CD14-positive monocyte (primary cell): ENCODE measurements at regions of chr11 and their contacts with region 1.

Region 1: DNA sequence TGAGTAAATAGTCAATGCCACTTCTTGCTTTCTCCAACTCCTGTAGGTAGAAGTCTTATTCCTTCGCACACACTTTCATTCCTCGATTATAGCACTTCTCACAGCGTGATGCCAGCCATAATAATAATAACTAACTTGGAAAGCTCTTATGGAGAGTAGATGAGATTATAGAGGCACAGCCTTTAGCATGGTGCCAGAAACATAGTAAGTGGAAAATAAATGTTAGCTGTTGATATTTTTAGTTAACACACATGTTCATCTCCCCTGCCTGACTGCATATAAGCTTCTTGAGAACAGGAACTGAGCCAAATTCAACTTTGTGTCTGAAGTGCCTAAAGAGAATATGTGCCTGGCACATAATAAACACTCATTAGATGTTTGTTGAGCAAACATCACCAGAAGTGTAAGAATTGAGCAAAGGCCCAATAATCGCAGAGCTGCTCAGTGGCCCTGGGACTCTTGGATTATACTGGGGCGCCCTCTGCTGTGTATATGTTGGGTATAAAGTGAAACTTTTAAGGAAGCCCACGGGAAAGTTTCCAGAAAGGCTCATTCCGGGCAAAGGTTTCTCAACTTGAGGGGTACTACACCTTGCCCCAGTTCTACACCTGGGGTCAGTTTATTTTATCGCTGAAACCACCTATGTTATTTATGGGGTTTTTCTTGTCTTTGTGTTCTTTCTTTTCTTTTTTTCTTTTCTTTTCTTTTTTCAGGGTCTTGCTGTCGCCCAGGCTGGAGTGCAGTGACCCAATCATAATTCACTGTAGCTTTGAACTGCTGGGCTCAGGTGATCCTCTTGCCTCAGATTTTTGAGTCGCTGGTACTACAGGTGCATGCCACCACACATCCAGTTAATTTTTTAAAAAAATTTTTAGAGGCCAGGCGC is 22.3 kb downstream of the SLN start:
- DNase-seq: peak; percentile 19 to 52 (median 42)
- H3K4me3 ChIP-seq: no peak overlapping the region
- H3K4me3 Mint-ChIP-seq: no peak overlapping the region
- H3K27ac ChIP-seq: no peak overlapping the region
- H3K27ac Mint-ChIP-seq: no peak overlapping the region
- H3K4me1 ChIP-seq: no peaks in the 10 kb centered on the region
- H3K4me1 Mint-ChIP-seq: peaks cover 2% of the 10 kb centered on the region
- H3K27me3 ChIP-seq: peaks cover 2 to 3% of the 10 kb centered on the region in 2 donors
- H3K27me3 Mint-ChIP-seq: peaks cover 4 to 11% (median 8%) of the 10 kb centered on the region in 3 donors
- CTCF ChIP-seq: peak; percentile 51

Region 2: GRCh38 chr11:107549253-107549953 is 140.2 kb before region 1 on chr11:
- intact Hi-C with region 1: loop called in 1 of 2 experiments (anchors 5 kb)
- DNase-seq: peak; percentile 12 to 46 (median 31)
- H3K4me3 ChIP-seq: no peak overlapping the region
- H3K4me3 Mint-ChIP-seq: no peak overlapping the region
- H3K27ac ChIP-seq: no peak overlapping the region
- H3K27ac Mint-ChIP-seq: no peak overlapping the region
- H3K4me1 ChIP-seq: no peaks in the 10 kb centered on the region
- H3K4me1 Mint-ChIP-seq: no peaks in the 10 kb centered on the region
- H3K27me3 ChIP-seq: no peaks in the 10 kb centered on the region
- H3K27me3 Mint-ChIP-seq: peaks cover 0 to 3% (median 0%) of the 10 kb centered on the region in 3 donors
- CTCF ChIP-seq: peak; percentile 86

Region 3: DNA sequence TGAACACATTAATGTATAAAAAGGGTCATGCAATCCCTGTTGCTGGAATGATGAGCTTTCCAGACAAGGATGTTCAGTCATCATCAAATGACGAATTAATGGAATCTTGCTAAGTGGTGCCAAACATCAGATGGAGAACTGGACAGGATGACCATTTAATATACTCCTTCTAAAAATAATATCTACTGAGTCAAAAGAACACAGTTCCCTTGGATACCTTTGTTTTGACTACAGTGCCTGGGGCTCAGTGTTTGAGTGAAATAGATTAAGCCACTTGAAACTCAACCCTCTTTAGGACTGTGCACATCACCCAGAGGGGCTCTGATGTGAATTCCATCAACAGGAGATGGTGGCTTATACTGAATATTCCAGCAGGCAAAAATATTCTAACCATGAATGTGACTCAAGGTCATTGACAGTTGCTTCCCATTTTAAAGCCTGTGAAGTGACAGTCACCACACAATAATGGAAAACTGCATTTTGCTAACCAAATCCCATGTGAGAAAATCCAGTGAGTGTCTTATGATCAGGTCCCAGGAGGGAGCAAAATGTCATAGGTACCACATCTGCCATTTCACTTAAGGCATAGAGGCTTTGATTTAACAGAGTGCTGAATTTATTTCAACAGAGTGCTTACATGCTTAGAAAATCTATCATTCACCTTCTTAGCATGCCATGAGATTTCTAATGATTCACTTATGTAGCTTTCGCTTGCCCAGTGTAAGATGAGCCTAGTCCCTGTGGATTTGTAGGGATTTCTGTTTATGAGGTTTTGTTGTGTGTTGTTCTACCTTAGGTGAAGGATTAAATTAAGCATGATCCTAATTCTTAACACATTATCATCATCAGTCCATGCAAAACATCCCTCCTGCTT is 63.6 kb after region 1 on chr11:
- intact Hi-C with region 1: no loop called
- DNase-seq: no peak
- H3K4me3 ChIP-seq: no peak overlapping the region
- H3K4me3 Mint-ChIP-seq: no peak overlapping the region
- H3K27ac ChIP-seq: no peak overlapping the region
- H3K27ac Mint-ChIP-seq: no peak overlapping the region
- H3K4me1 ChIP-seq: no peaks in the 10 kb centered on the region
- H3K4me1 Mint-ChIP-seq: no peaks in the 10 kb centered on the region
- H3K27me3 ChIP-seq: peaks cover 0 to under 1% of the 10 kb centered on the region in 2 donors
- H3K27me3 Mint-ChIP-seq: peaks cover 8 to 27% (median 14%) of the 10 kb centered on the region in 3 donors
- CTCF ChIP-seq: no peak